Activated naive CD4-positive, alpha-beta T cell treated with anti-CD3 and anti-CD28 coated beads for 36 hours (primary cell): ENCODE measurements at regions of chr3 and their contacts with region 1.

Region 1: DNA sequence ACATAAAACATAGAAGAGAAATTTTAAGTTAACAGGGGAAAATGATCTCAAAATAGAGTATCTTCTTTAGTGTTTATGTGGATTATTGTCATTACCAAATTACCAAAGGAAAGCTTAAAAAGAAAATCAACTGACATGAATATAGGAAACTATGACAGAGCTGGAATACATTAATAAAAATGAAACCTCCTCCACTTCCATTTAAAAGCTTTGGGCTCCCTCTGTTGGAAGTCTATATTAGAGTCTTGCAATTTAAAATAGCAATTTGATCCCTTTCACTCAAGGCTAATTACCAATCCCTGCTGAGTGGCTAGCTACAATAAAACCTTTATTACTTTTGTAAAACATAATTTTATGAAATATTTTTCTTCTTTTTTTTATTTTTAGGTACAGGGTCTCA is 61.4 kb upstream of the IMPG2 start:
- DNase-seq: no peak
- H3K4me3 Mint-ChIP-seq: no peak overlapping the region
- H3K27ac Mint-ChIP-seq: no peak overlapping the region
- H3K4me1 Mint-ChIP-seq: peaks cover 59% of the 10 kb centered on the region
- H3K27me3 Mint-ChIP-seq: no peaks in the 10 kb centered on the region

Region 2: DNA sequence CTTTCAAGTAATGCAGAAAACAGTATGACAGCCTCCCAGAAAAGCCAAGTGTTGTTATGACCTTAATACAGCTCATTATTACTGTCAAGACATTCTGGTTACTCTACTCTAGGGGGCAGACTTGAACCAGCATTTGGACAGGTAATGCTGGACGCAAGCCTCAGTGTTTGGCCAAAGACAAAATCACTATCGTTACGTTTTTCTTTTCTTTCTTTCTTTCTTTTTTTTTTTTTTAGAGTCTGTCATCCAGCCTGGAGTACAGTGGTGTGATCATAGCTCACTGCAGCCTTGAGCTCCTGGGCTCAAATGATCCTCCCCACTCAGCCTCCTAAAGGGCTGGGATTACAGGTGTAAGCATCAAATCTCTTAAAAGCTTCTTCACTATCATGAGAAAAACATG is 918.8 kb before region 1 on chr3:
- CTCF ChIA-PET with region 1: no interaction called
- intact Hi-C with region 1: loop called (anchors 10 kb)
- DNase-seq: peak; percentile 27
- H3K4me3 Mint-ChIP-seq: no peak overlapping the region
- H3K27ac Mint-ChIP-seq: no peak overlapping the region
- H3K4me1 Mint-ChIP-seq: peaks cover 5% of the 10 kb centered on the region
- H3K27me3 Mint-ChIP-seq: peaks cover 3% of the 10 kb centered on the region

Region 3: DNA sequence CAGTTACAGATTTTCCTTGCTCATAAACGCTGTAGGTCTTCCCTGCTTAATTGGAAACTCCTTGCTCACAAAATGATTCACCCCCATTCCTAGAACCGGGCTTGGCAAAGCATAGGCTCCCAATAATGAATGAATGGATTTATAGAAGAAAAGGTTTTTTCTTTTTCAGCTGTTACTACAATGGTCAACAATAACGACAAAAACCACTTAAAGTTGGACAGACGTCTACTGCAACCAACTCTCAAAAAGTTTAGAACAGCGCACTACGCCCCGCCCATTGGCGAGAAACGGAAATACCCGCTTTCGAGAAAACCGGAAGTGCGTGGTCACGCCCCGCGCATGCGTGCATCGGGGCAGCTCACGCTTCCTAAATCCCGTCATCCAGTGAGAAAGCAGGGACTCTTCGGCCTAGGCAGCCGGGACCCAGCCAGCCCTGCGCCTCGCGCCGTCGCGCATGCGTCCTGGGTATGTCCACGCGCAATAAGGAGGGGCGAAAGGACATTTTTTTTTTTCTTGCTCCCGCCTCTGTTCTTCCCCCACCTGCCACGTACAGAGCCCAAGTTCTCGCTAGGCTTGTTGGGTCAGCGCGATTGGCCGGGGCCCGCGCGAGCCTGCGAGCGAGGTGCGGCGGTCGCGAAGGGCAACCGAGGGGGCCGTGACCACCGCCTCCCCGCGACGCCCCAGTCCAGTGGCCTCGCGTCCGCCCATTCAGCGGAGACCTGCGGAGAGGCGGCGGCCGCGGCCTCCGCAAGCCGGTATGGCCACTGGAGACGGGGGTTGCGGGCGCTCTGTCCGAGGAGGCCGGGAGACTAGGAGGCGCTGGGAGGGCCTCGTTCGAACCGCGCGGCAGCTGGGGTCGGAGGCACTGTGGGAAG is 672.6 kb before region 1 on chr3 and contains the start of gene TFG:
- CTCF ChIA-PET with region 1: no interaction called
- intact Hi-C with region 1: loop called (anchors 10 kb)
- DNase-seq: peak; percentile 98
- H3K4me3 Mint-ChIP-seq: peak within 1 kb of the TSS; percentile 83
- H3K27ac Mint-ChIP-seq: peak within 1 kb of the TSS; percentile 97
- H3K4me1 Mint-ChIP-seq: peaks cover 39% of the 10 kb centered on the region
- H3K27me3 Mint-ChIP-seq: peaks cover 6% of the 10 kb centered on the region
- total RNA-seq, gene TFG: 45.6 to 46.0 TPM

Region 4: DNA sequence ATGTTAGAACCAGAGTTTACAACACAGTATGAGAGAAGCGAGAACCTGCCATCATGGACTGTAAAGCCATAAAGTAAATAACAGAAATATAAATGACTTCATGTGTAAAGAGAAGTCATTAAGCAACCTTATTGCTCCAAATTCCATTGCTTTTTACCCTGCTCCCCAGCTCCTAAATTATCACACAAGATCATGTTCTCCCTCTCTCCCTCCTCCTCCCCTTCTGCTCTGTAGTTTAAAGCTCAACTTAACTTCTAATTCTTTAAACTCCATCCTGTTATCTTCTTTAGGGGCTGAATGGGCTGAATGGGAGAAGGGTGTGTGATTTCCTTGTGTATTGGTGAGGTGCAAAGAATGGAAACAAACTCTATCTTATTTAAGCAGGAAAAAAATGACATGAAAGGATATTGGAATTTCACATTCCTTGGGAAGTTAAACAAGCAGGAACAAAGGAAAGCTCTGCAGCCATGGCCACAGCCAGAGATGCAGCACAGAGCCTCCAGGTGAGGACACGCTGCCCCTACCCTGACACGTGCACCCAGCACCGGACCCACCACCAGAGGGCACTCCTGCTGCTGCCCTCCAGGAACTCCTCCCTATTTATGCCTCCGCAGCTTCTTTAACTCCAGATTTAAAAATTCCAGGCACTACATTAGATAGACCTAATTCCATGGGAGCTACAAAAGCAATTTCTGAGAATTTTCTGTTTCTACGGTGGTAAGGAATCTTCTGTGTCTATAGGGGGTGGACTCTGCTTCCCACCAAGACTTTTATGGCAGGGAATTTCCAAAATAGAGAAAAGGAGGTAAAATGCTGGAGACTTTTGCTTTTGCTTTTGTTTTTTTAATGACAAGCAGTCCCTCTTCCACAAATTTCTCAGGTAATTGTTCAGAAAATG is 311.7 kb before region 1 on chr3:
- CTCF ChIA-PET with region 1: interaction called, 10 read pairs
- intact Hi-C with region 1: loop called (anchors 1 kb)
- DNase-seq: peak; percentile 84
- H3K4me3 Mint-ChIP-seq: no peak overlapping the region
- H3K27ac Mint-ChIP-seq: no peak overlapping the region
- H3K4me1 Mint-ChIP-seq: peaks cover 6% of the 10 kb centered on the region
- H3K27me3 Mint-ChIP-seq: peaks cover 17% of the 10 kb centered on the region

Region 5: DNA sequence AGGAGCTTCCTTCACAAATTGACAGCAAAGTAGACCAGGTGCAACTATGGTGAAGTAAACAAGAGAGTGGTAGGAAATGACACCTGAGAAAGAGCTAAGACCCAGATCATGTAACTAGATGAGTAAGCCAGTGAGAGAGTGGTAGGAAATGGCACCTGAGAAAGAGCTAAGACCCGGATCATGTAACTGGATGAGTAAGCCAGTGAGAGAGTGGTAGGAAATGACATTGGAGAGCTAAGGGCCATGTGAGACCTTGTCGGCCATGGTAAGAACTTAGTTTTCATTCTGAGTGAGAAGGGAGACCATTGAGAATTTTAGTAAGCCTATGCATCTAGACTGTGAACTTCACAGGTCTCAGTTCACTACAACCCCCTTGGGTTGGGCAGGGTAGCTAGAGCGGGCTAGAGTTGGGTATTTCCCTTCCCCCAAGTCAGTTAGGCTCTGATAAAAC is 136.6 kb after region 1 on chr3:
- CTCF ChIA-PET with region 1: interaction called, 3 read pairs
- intact Hi-C with region 1: loop called (anchors 1 kb)
- DNase-seq: peak; percentile 71
- H3K4me3 Mint-ChIP-seq: peak overlapping the region; percentile 73
- H3K27ac Mint-ChIP-seq: peak overlapping the region; percentile 97
- H3K4me1 Mint-ChIP-seq: peaks cover 61% of the 10 kb centered on the region
- H3K27me3 Mint-ChIP-seq: no peaks in the 10 kb centered on the region

Region 6: GRCh38 chr3:101615525-101615924 is 233.7 kb after region 1 on chr3:
- CTCF ChIA-PET with region 1: no interaction called
- intact Hi-C with region 1: no loop called
- DNase-seq: no peak
- H3K4me3 Mint-ChIP-seq: no peak overlapping the region
- H3K27ac Mint-ChIP-seq: no peak overlapping the region
- H3K4me1 Mint-ChIP-seq: no peaks in the 10 kb centered on the region
- H3K27me3 Mint-ChIP-seq: no peaks in the 10 kb centered on the region